Activated T-helper 1 cell treated with anti-CD3 and anti-CD28 coated beads, Interleukin-12 subunit alpha, Interleukin-12 subunit beta, Interleukin-2, Interleukin-4 antibody, amounts not matched to agents 30 ng/mL and 10 ng/mL and 1 ng/mL, durations not matched to agents 14 hours and 24 hours and 36 hours (primary cell): ENCODE measurements at regions of chr9 and their contacts with region 1.

Region 1: DNA sequence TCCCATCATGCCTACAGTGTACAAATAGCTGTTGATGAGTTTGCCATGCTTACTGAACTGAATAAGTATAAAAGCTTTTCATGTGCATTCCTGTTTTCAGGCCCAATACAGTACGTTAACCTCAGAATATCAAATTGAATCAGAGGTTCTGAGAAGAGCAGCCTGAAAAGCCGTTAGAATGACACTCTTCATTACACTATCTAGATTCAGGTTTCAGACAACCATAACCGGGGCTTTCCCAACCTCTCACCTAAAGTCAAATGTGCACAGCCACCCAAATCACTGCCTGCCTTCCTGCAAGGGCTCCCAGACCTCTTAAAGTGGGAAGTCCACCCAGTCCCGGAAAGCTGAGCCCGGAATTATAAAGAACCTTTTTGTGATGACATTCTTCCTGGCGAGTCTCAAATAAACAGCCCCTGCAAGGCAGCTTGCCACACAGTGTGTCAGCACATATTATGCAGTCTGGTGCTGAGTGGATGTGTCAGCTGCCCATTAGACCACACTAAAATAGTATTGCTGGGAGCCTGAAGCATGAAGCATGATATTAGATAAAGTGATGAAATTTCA is 245.8 kb downstream of the TLE4 start:
- DNase-seq: peak; percentile 16
- H3K4me3 Mint-ChIP-seq: no peak overlapping the region
- H3K27ac Mint-ChIP-seq: no peak overlapping the region
- H3K4me1 Mint-ChIP-seq: peaks cover 53% of the 10 kb centered on the region
- H3K27me3 Mint-ChIP-seq: peaks cover 3% of the 10 kb centered on the region

Region 2: GRCh38 chr9:79007701-79008483 is 809.6 kb before region 1 on chr9:
- intact Hi-C with region 1: no loop called
- DNase-seq: no peak
- H3K4me3 Mint-ChIP-seq: no peak overlapping the region
- H3K27ac Mint-ChIP-seq: no peak overlapping the region
- H3K4me1 Mint-ChIP-seq: no peaks in the 10 kb centered on the region
- H3K27me3 Mint-ChIP-seq: peaks cover 2% of the 10 kb centered on the region

Region 3: DNA sequence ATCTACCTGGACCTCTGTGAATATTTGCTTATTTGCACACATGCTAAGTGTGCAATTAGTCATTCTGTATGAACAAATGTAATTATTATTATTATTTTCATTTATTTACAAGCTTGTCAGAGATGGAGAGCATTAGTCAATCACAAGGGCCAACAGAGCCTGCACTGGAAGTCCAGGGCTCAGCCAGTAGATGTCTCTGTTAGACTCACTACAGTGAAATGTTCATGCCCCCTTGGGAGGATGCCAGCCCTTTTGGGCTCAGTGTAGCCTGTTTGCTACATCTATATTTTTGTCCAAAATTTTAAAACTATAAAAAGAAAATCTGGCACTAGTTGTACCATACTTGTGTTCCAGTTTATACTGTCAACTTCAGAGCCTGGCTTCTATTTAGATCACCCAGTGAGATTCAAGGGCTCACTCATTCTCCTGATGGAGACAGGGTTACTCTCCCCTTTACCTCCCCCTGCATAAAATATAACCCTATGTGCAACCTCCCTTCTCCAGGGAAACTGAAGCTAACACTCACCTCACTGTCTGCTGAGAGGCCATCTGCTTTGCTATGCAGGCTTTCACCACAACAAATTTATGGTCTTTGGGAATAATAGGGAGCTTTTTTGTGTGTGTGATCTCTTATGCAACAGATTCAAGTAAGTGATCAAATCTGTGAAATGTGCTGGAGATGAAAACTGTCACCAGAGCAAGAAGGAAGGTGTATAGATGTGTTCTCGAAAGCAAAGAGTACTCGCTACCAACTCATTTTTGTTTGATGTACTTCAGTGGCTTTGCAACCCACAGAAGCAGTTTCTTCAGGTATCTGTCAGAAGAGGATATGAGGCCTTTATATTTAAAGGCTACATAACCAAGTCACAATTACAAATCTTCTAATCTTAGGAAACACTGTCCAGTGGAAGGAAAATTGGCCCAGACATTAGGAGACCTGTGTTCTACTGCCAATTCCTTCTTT is 345.7 kb before region 1 on chr9:
- intact Hi-C with region 1: loop called (anchors 5 kb)
- DNase-seq: no peak
- H3K4me3 Mint-ChIP-seq: no peak overlapping the region
- H3K27ac Mint-ChIP-seq: no peak overlapping the region
- H3K4me1 Mint-ChIP-seq: peaks cover 31% of the 10 kb centered on the region
- H3K27me3 Mint-ChIP-seq: no peaks in the 10 kb centered on the region

Region 4: GRCh38 chr9:79623799-79624721 is 193.5 kb before region 1 on chr9:
- intact Hi-C with region 1: loop called (anchors 1 kb)
- DNase-seq: peak; percentile 4
- H3K4me3 Mint-ChIP-seq: peak overlapping the region; percentile 62
- H3K27ac Mint-ChIP-seq: peak overlapping the region; percentile 78
- H3K4me1 Mint-ChIP-seq: peaks cover 31% of the 10 kb centered on the region
- H3K27me3 Mint-ChIP-seq: no peaks in the 10 kb centered on the region

Region 5: GRCh38 chr9:79799691-79800335 is 17.7 kb before region 1 on chr9:
- intact Hi-C with region 1: no loop called
- DNase-seq: no peak
- H3K4me3 Mint-ChIP-seq: no peak overlapping the region
- H3K27ac Mint-ChIP-seq: no peak overlapping the region
- H3K4me1 Mint-ChIP-seq: no peaks in the 10 kb centered on the region
- H3K27me3 Mint-ChIP-seq: no peaks in the 10 kb centered on the region

Region 6: GRCh38 chr9:79883073-79883645 is 65.6 kb after region 1 on chr9:
- intact Hi-C with region 1: loop called (anchors 5 kb)
- DNase-seq: no peak
- H3K4me3 Mint-ChIP-seq: no peak overlapping the region
- H3K27ac Mint-ChIP-seq: no peak overlapping the region
- H3K4me1 Mint-ChIP-seq: peaks cover 42% of the 10 kb centered on the region
- H3K27me3 Mint-ChIP-seq: peaks cover 1% of the 10 kb centered on the region